Activated T-helper 2 cell treated with anti-CD3 and anti-CD28 coated beads, Interferon-gamma antibody, Interleukin-2, Interleukin-4, amounts not matched to agents 10 μg/mL and 5 μg/mL and 100 μg/mL, durations not matched to agents 14 hours and 24 hours and 36 hours (primary cell): ENCODE measurements at regions of chr7 and their contacts with region 1.

Region 1: DNA sequence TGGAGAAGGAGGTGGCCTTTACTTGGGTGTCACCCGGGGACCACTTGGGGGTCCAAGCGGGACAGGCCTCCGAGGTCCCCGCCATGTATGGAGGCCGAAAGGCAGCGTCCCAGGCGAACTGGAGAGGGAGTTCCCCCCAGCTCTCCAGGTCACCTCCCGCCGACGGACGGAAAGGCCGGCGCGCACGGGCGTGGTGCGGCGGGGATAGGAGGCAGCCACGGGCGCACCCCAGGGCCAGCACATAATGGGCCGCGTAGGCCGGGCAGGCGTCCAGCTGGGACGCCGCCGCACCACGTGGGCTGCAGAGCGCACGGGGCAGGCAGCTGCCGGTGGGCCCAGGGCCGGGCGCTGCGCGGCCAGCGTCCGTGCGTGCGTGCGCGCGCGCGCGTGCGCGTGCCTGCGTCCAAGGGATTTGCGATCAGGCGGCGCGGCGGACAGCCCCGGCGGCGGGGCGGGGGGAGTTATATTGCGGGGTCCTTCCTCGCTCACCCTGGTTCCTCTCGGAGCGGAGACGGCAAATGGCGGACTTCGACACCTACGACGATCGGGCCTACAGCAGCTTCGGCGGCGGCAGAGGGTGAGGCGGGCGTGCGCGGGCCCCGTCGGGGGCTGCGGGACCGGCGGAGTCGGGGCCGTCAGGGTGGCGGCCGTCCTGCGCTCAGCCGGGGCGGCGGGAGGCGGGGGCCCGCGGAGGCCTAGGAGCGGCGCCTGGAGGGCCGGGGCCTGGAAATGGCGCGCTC is at the start of gene EIF4H:
- DNase-seq: peak; percentile 93
- H3K4me3 Mint-ChIP-seq: peak within 1 kb of the TSS; percentile 91
- H3K27ac Mint-ChIP-seq: peak within 1 kb of the TSS; percentile 86
- H3K4me1 Mint-ChIP-seq: peaks cover 35% of the 10 kb centered on the region
- H3K27me3 Mint-ChIP-seq: no peaks in the 10 kb centered on the region
- total RNA-seq, gene EIF4H: 367 and 372 TPM in 2 replicates

Region 2: DNA sequence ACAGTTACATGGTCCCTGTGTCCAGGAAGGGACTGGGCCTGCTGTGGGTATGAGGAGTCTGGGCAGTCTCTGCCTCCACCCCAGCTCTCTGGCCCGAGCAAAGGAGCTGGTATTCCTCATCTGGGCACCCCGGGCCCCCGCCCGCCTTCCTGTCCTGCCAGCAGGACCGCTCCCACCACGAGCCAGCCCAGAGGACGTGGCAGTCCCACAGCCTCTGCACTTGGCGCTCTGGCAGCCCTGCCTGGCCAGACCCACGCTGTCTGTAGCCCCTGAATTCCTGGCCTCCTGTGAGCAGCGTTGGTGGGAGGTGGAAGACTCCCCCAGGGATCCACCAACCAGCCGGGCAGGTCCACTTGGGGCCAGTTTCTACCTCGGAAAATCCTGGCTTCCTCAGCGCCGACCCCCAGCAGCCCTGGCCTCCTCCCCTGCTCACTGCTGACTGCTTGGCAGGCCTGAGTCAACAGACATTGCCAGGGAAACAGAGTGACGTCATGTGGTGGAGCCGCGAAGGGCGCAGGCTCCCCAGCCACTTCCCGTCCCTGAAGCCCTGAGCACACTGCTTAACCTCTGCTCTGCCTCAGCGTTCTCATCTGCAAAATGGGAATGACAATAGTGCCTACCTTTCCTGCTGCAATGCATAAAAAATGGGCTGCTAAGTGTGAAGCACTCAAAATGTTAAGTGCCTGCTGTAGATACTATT is 112.0 kb before region 1 on chr7:
- intact Hi-C with region 1: loop called (anchors 1 kb)
- DNase-seq: peak; percentile 43
- H3K4me3 Mint-ChIP-seq: no peak overlapping the region
- H3K27ac Mint-ChIP-seq: peak overlapping the region; percentile 80
- H3K4me1 Mint-ChIP-seq: peaks cover 2% of the 10 kb centered on the region
- H3K27me3 Mint-ChIP-seq: peaks cover 6% of the 10 kb centered on the region

Region 3: DNA sequence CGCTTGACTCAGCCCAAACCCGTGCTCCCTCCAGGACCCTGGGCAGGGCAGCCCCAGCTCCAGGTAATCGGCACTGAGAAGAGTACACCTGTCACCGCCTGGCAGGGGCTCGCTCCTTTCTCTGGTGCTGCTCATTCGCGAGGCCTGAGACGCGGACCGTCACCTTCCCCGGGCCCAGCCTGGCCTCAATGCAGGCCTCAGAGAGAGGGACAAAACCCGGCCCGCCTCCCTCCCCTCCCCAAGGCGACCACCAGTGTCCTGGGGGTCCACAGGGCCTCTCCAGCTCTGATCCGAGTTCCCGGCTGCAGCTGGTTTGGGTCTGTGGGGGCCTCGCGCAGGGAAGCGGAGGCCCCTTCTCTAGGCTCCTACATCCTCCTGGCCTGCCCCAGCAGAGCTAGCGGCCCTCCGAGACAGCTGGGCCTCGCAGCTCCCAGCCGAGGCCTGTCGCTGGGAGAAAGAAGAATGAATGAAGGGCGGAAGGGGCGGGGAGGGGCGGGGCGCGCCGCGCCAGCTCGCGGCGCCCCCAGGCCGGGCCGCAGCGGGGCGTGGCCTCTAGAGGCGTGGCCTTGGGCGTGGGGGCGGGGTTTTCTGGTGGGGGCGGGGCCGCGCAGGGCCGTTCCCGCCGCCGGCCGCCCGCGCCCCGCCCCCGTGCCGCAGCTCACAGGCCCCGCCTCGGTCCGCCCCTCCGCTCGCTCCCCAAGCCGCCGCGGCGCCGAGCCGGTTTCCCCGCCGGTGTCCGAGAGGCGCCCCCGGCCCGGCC is 90.7 kb before region 1 on chr7 and contains the start of gene LIMK1:
- intact Hi-C with region 1: loop called (anchors 1 kb)
- DNase-seq: peak; percentile 80
- H3K4me3 Mint-ChIP-seq: peak within 1 kb of the TSS; percentile 87
- H3K27ac Mint-ChIP-seq: peak within 1 kb of the TSS; percentile 84
- H3K4me1 Mint-ChIP-seq: peaks cover 9% of the 10 kb centered on the region
- H3K27me3 Mint-ChIP-seq: peaks cover 6% of the 10 kb centered on the region
- total RNA-seq, gene LIMK1: 29.6 and 34.4 TPM in 2 replicates

Region 4: GRCh38 chr7:74187915-74188630 is 14.0 kb after region 1 on chr7:
- intact Hi-C with region 1: loop called (anchors 2 kb)
- DNase-seq: no peak
- H3K4me3 Mint-ChIP-seq: no peak overlapping the region
- H3K27ac Mint-ChIP-seq: no peak overlapping the region
- H3K4me1 Mint-ChIP-seq: peaks cover 27% of the 10 kb centered on the region
- H3K27me3 Mint-ChIP-seq: no peaks in the 10 kb centered on the region

Region 5: GRCh38 chr7:74199551-74200242 is 25.7 kb after region 1 on chr7:
- intact Hi-C with region 1: no loop called
- DNase-seq: no peak
- H3K4me3 Mint-ChIP-seq: no peak overlapping the region
- H3K27ac Mint-ChIP-seq: no peak overlapping the region
- H3K4me1 Mint-ChIP-seq: peaks cover 7% of the 10 kb centered on the region
- H3K27me3 Mint-ChIP-seq: peaks cover 3% of the 10 kb centered on the region

Region 6: GRCh38 chr7:74254129-74254857 is 80.3 kb after region 1 on chr7 and contains the start of gene RFC2:
- intact Hi-C with region 1: loop called (anchors 2 kb)
- DNase-seq: peak; percentile 97
- H3K4me3 Mint-ChIP-seq: peak within 1 kb of the TSS; percentile 96
- H3K27ac Mint-ChIP-seq: peak within 1 kb of the TSS; percentile 91
- H3K4me1 Mint-ChIP-seq: peaks cover 17% of the 10 kb centered on the region
- H3K27me3 Mint-ChIP-seq: no peaks in the 10 kb centered on the region
- total RNA-seq, gene RFC2: 82.9 and 85.2 TPM in 2 replicates

Region 7: DNA sequence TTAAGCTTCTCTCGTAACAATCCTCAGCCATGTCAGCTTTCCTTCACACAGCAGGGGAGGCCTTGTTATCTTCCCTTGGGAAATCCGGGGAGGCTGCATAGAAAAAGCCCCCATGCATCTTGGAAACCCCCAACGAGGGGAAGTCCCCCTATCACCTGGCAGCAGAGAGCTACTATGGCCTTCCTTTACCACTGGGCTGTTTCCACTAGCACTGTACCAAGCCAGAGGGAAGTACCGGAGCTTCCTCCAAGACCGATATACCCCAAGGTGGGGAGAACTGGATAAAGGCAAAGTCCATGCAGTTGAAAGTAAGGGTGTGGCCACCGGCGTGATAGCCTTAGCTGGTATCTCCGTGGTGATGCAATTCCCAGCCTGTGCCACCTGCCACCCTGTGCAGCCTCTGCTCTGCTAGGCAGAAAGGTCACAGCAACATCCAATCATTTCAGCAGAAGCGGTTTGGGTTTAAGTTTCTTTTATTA is 110.8 kb after region 1 on chr7:
- intact Hi-C with region 1: no loop called
- DNase-seq: no peak
- H3K4me3 Mint-ChIP-seq: no peak overlapping the region
- H3K27ac Mint-ChIP-seq: no peak overlapping the region
- H3K4me1 Mint-ChIP-seq: peaks cover 9% of the 10 kb centered on the region
- H3K27me3 Mint-ChIP-seq: peaks cover 17% of the 10 kb centered on the region